ENCODE measurements at regions of chr3 and their contacts with region 1.

Region 1: DNA sequence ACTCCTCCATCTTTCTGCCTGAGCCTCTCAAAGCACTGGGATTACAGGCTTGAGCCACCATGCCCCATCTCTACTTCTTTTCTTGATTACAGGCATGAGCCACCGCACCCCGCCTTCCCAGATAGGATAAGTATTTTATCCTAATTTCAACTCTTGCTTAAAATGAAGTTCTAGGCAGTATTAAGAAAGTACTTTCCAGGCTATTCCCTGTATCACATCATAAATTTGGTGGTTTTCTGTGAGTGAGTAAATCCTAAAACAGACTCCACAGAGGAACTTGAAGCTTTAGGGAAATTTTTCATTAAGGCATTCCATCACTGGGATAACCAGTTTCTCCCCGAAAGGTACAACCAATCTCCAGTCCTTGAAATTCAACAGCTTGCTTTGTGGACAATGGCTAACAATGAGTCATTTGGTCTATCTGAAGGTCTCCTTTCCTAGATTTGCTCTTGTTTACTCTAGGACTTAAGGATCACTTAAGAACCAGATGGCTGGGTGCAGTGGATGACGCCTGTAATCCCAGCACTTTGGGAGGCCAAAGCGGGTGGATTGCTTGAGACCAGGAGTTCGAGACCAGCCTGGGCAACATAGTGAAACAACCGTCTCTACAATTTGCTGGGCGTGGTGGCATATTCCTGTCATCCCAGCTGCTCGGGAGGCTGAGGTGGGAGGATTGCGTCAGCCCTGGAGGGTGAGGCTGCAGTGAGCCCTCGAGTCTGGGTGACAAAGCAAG is 49.7 kb upstream of the SKIL start:
- DNase-seq: peak; percentile 79
- ATAC-seq: peak; percentile 10; the same call in 1 of the 2 replicates
- H3K4me3 ChIP-seq: no peak overlapping the region
- H3K27ac ChIP-seq: no peak overlapping the region
- H3K4me1 ChIP-seq: peaks cover 4% of the 10 kb centered on the region
- H3K27me3 ChIP-seq: no peaks in the 10 kb centered on the region
- CTCF ChIP-seq: no peak
- POLR2A ChIP-seq: no peak
- RAD21 ChIP-seq: no peak

Region 2: DNA sequence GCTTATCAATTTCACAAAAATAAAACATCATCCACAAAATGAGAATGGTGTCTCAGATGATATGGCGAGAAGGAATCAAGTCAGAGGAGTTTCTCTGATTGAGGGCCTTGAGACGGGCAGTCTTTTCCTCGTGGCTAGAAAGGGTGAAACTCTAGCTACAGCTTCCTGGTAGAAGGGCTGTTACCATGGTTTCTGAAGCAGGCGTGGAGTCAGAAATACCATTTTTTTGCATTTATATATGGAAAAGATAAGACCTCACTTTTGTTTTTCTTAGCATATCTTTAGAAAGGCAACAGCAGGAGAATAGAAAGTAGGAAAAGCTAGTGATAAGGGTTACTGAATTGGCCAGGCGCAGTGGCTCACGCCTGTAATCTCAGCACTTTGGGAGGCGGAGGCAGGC is 413.7 kb before region 1 on chr3:
- CTCF ChIA-PET with region 1: no interaction called
- POLR2A ChIA-PET with region 1: no interaction called
- dilution Hi-C with region 1: no loop called
- in situ Hi-C with region 1: no loop called
- intact Hi-C with region 1: no loop called
- DNase-seq: no peak
- ATAC-seq: no peak
- H3K4me3 ChIP-seq: no peak overlapping the region
- H3K27ac ChIP-seq: no peak overlapping the region
- H3K4me1 ChIP-seq: no peaks in the 10 kb centered on the region
- H3K27me3 ChIP-seq: no peaks in the 10 kb centered on the region; the same call in 1 of the 2 replicates
- CTCF ChIP-seq: no peak
- POLR2A ChIP-seq: no peak
- RAD21 ChIP-seq: no peak

Region 3: GRCh38 chr3:170180908-170181879 is 126.6 kb before region 1 on chr3 and contains the start of gene PHC3:
- CTCF ChIA-PET with region 1: no interaction called
- POLR2A ChIA-PET with region 1: interaction called, 13 read pairs
- dilution Hi-C with region 1: no loop called
- in situ Hi-C with region 1: no loop called
- intact Hi-C with region 1: no loop called
- DNase-seq: peak; percentile 85
- ATAC-seq: peak; percentile 84
- H3K4me3 ChIP-seq: peak within 1 kb of the TSS; percentile 92
- H3K27ac ChIP-seq: peak within 1 kb of the TSS; percentile 99
- H3K4me1 ChIP-seq: peaks cover 2% of the 10 kb centered on the region; the same call in 1 of the 2 replicates
- H3K27me3 ChIP-seq: no peaks in the 10 kb centered on the region
- CTCF ChIP-seq: no peak
- POLR2A ChIP-seq: peak; percentile 74; the same call in 1 of the 2 replicates
- RAD21 ChIP-seq: no peak
- total RNA-seq, gene PHC3: 17.5 and 26.3 TPM in 2 replicates

Region 4: GRCh38 chr3:170277833-170278580 is 29.8 kb before region 1 on chr3:
- CTCF ChIA-PET with region 1: no interaction called
- POLR2A ChIA-PET with region 1: no interaction called
- dilution Hi-C with region 1: no loop called
- in situ Hi-C with region 1: no loop called
- intact Hi-C with region 1: no loop called
- DNase-seq: no peak
- ATAC-seq: no peak
- H3K4me3 ChIP-seq: no peak overlapping the region
- H3K27ac ChIP-seq: no peak overlapping the region
- H3K4me1 ChIP-seq: peaks cover 6% of the 10 kb centered on the region
- H3K27me3 ChIP-seq: no peaks in the 10 kb centered on the region
- CTCF ChIP-seq: no peak
- POLR2A ChIP-seq: no peak
- RAD21 ChIP-seq: no peak

Region 5: GRCh38 chr3:170350515-170351413 is 42.9 kb after region 1 on chr3:
- CTCF ChIA-PET with region 1: no interaction called
- POLR2A ChIA-PET with region 1: no interaction called
- dilution Hi-C with region 1: no loop called
- in situ Hi-C with region 1: loop called (anchors 5 kb)
- intact Hi-C with region 1: no loop called
- DNase-seq: no peak
- ATAC-seq: no peak
- H3K4me3 ChIP-seq: no peak overlapping the region
- H3K27ac ChIP-seq: no peak overlapping the region
- H3K4me1 ChIP-seq: peaks cover 4% of the 10 kb centered on the region
- H3K27me3 ChIP-seq: no peaks in the 10 kb centered on the region
- CTCF ChIP-seq: no peak
- POLR2A ChIP-seq: no peak
- RAD21 ChIP-seq: no peak

Region 6: GRCh38 chr3:170357176-170357919 is 49.5 kb after region 1 on chr3 and contains the start of gene SKIL:
- CTCF ChIA-PET with region 1: interaction called, 3 read pairs
- POLR2A ChIA-PET with region 1: no interaction called
- dilution Hi-C with region 1: no loop called
- in situ Hi-C with region 1: loop called (anchors 5 kb)
- intact Hi-C with region 1: loop called (anchors 2 kb)
- DNase-seq: peak; percentile 96
- ATAC-seq: peak; percentile 77
- H3K4me3 ChIP-seq: peak within 1 kb of the TSS; percentile 73
- H3K27ac ChIP-seq: peak within 1 kb of the TSS; percentile 96
- H3K4me1 ChIP-seq: peaks cover 17% of the 10 kb centered on the region
- H3K27me3 ChIP-seq: no peaks in the 10 kb centered on the region
- CTCF ChIP-seq: 0 out of 2 replicates have a peak, but pooled peaks have one; percentile 11
- POLR2A ChIP-seq: peak; percentile 95
- RAD21 ChIP-seq: no peak
- total RNA-seq, gene SKIL: 51.7 and 55.9 TPM in 2 replicates

Region 7: GRCh38 chr3:170829546-170830272 is 521.9 kb after region 1 on chr3:
- CTCF ChIA-PET with region 1: no interaction called
- POLR2A ChIA-PET with region 1: no interaction called
- dilution Hi-C with region 1: no loop called
- in situ Hi-C with region 1: loop called (anchors 5 kb)
- intact Hi-C with region 1: no loop called
- DNase-seq: no peak
- ATAC-seq: no peak
- H3K4me3 ChIP-seq: no peak overlapping the region
- H3K27ac ChIP-seq: no peak overlapping the region
- H3K4me1 ChIP-seq: no peaks in the 10 kb centered on the region; the same call in 1 of the 2 replicates
- H3K27me3 ChIP-seq: peaks cover 20% of the 10 kb centered on the region
- CTCF ChIP-seq: no peak
- POLR2A ChIP-seq: no peak
- RAD21 ChIP-seq: no peak

Region 8: DNA sequence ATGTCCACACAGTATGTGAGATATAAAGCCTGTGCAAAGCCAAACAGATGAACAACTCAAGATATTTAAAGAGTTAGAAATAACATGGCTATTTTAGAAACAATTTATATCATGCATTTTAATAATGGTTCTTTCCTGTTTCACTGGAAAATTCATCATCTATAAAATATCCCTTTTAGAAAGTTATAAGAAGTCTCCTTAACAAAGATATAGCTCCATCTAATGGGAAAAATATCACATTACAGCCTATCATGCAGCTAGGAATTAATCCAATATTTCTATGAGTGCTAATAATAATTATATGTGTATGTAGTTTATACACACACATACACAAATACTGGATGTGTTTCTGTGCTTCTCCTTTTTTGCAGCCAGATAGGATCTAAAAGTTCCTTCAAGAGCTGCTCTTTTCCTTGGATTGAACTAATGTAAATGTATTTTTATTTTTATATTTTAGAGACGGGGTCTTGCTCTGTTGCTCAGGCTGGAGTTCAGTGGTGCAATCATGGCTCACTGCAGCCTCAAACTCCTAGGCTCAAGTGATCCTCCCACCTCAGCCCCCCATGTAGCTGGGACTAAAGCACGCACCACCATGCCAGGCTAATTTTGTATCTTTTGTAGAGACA is 540.6 kb after region 1 on chr3:
- CTCF ChIA-PET with region 1: interaction called, 3 read pairs
- POLR2A ChIA-PET with region 1: no interaction called
- dilution Hi-C with region 1: no loop called
- in situ Hi-C with region 1: no loop called
- intact Hi-C with region 1: loop called (anchors 1 kb)
- DNase-seq: peak; percentile 52
- ATAC-seq: peak; percentile 67; the same call in 1 of the 2 replicates
- H3K4me3 ChIP-seq: no peak overlapping the region
- H3K27ac ChIP-seq: no peak overlapping the region
- H3K4me1 ChIP-seq: no peaks in the 10 kb centered on the region
- H3K27me3 ChIP-seq: no peaks in the 10 kb centered on the region; the same call in 1 of the 2 replicates
- CTCF ChIP-seq: peak; percentile 65
- POLR2A ChIP-seq: no peak
- RAD21 ChIP-seq: peak; percentile 63